HepG2 (cell line): ENCODE measurements at regions of chr2 and their contacts with region 1.

Region 1: GRCh38 chr2:154447727-154448418 is 250.6 kb upstream of the KCNJ3 start:
- DNase-seq: peak; percentile 78
- ATAC-seq: peak; percentile 92
- H3K4me3 ChIP-seq: peak overlapping the region; percentile 17 to 50 (median 19); a peak in 2 of 6 replicates
- H3K27ac ChIP-seq: peak overlapping the region; percentile 91
- H3K4me1 ChIP-seq: peaks cover 57% of the 10 kb centered on the region
- H3K27me3 ChIP-seq: no peaks in the 10 kb centered on the region
- CTCF ChIP-seq: no peak
- EP300 ChIP-seq: peak in 1 of 2 experiments; percentile 87; a peak in 2 of 4 replicates
- POLR2A ChIP-seq: peak; percentile 59 to 71; a peak in 3 of 4 replicates
- RAD21 ChIP-seq: no peak

Region 2: DNA sequence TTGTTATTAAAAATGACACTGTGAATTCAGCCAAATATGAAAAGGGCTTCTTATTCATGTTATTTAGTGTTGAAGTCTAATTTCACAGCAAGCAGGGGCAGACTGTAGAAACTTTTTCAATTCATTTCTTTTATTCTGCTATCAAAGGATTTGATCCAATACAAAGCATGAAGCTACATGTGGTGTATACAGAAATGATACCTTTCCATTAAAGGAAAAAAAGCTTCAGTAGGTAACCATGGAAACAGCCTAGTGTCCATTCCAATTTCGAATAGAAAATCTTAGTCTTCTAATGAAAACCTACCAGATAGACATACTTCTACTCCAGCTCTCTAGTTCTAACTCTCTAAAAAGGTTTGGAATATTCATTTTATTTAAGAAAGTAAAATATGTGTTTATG is 25.6 kb before region 1 on chr2:
- CTCF ChIA-PET with region 1: no interaction called
- POLR2A ChIA-PET with region 1: no interaction called
- in situ Hi-C with region 1: no loop called
- intact Hi-C with region 1: no loop called
- DNase-seq: no peak
- ATAC-seq: no peak
- H3K4me3 ChIP-seq: no peak overlapping the region
- H3K27ac ChIP-seq: no peak overlapping the region
- H3K4me1 ChIP-seq: no peaks in the 10 kb centered on the region
- H3K27me3 ChIP-seq: no peaks in the 10 kb centered on the region
- CTCF ChIP-seq: no peak
- EP300 ChIP-seq: no peak
- POLR2A ChIP-seq: no peak
- RAD21 ChIP-seq: no peak

Region 3: DNA sequence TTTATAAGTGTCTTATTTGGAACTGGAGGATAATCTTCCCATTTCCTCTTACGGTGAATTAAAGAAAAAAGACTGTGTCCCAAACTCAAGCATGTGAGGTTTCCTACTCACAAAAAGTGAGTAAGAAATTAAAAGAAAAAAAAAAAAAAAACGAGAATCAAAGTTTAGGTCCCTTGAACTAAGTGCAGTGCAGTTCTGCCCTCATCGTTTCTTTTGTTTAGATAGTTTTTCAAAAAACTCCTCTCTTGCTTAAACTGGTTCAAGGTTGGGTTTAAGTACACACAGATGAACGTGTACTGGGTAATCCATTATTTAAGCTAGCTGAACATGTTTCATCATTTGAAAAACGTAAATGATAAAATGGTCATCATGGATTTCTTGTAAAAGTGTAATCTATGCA is 14.8 kb after region 1 on chr2:
- CTCF ChIA-PET with region 1: no interaction called
- POLR2A ChIA-PET with region 1: interaction called, 13 read pairs
- in situ Hi-C with region 1: no loop called
- intact Hi-C with region 1: no loop called
- DNase-seq: peak; percentile 63
- ATAC-seq: peak; percentile 99
- H3K4me3 ChIP-seq: no peak overlapping the region
- H3K27ac ChIP-seq: peak overlapping the region; percentile 51
- H3K4me1 ChIP-seq: peaks cover 22% of the 10 kb centered on the region
- H3K27me3 ChIP-seq: no peaks in the 10 kb centered on the region
- CTCF ChIP-seq: no peak
- EP300 ChIP-seq: peak in 1 of 2 experiments; percentile 92; a peak in 2 of 4 replicates
- POLR2A ChIP-seq: no peak
- RAD21 ChIP-seq: no peak

Region 4: GRCh38 chr2:154484338-154485099 is 36.6 kb after region 1 on chr2:
- CTCF ChIA-PET with region 1: no interaction called
- POLR2A ChIA-PET with region 1: no interaction called
- in situ Hi-C with region 1: no loop called
- intact Hi-C with region 1: loop called (anchors 5 kb)
- DNase-seq: no peak
- ATAC-seq: peak; percentile 35; the same call in 1 of the 3 replicates
- H3K4me3 ChIP-seq: no peak overlapping the region
- H3K27ac ChIP-seq: no peak overlapping the region
- H3K4me1 ChIP-seq: peaks cover 32% of the 10 kb centered on the region
- H3K27me3 ChIP-seq: no peaks in the 10 kb centered on the region
- CTCF ChIP-seq: no peak
- EP300 ChIP-seq: no peak
- POLR2A ChIP-seq: no peak
- RAD21 ChIP-seq: no peak

Region 5: GRCh38 chr2:154686179-154686578 is 238.3 kb after region 1 on chr2:
- CTCF ChIA-PET with region 1: no interaction called
- POLR2A ChIA-PET with region 1: no interaction called
- in situ Hi-C with region 1: no loop called
- intact Hi-C with region 1: loop called (anchors 2 kb)
- DNase-seq: no peak
- ATAC-seq: no peak; the same call in 2 of the 3 replicates
- H3K4me3 ChIP-seq: no peak overlapping the region
- H3K27ac ChIP-seq: no peak overlapping the region
- H3K4me1 ChIP-seq: no peaks in the 10 kb centered on the region
- H3K27me3 ChIP-seq: no peaks in the 10 kb centered on the region
- CTCF ChIP-seq: no peak
- EP300 ChIP-seq: no peak
- POLR2A ChIP-seq: no peak
- RAD21 ChIP-seq: no peak